ENCODE measurements at regions of chr2 and their contacts with region 1.

Region 1: GRCh38 chr2:237674731-237675276 is 47.4 kb downstream of the LRRFIP1 start:
- DNase-seq: peak; percentile 90 to 98 (median 94)
- H3K4me3 ChIP-seq: peak overlapping the region; percentile 1 to 49
- H3K4me3 Mint-ChIP-seq: peak overlapping the region; percentile 85 to 94 (median 92)
- H3K27ac ChIP-seq: peak overlapping the region; percentile 92
- H3K27ac Mint-ChIP-seq: peak overlapping the region; percentile 95 to 100 (median 100)
- H3K4me1 ChIP-seq: peaks cover 47% of the 10 kb centered on the region
- H3K4me1 Mint-ChIP-seq: peaks cover 38 to 53% (median 47%) of the 10 kb centered on the region in 4 donors
- H3K27me3 ChIP-seq: no peaks in the 10 kb centered on the region
- H3K27me3 Mint-ChIP-seq: peaks cover 0 to 1% of the 10 kb centered on the region in 2 donors

Region 2: DNA sequence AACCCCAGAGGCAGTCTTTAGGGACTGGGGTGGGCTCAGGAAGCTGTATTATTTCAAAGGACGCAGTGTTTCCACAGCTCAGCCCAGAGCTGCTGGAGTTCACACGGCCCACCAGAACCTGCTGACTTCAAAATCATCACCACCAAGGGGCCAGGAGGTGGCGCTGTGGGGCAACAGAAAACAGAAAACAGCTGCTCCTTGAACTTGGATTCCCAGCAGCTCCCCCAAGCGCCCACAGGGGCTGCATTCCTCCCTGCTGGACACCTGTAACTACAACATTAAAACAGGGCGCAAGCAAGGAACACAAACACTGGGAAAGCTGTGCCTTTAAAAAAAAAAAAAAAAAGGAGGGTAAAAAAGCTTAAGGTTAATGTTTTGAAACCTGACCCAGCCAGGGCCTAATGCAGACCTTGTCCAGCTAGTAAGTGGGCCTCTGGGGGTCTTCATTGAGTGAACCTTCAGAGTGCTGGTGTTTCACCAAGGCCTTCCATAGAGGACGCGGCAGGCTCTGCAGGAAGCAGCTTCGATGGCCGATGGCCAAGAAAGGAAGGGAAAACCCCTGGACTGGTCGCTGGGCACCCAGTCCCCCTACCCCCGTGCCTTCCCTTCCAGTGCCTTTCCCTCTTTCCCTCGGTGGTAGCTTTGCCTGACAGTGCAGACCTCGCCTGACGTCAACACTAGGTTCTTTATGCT is 161.9 kb before region 1 on chr2:
- CTCF ChIA-PET with region 1: interaction called, 18 read pairs
- POLR2A ChIA-PET with region 1: no interaction called
- intact Hi-C with region 1: loop called (anchors 1 kb)
- DNase-seq: peak; percentile 64 to 74 (median 70)
- H3K4me3 ChIP-seq: no peak overlapping the region
- H3K4me3 Mint-ChIP-seq: no peak overlapping the region
- H3K27ac ChIP-seq: no peak overlapping the region
- H3K27ac Mint-ChIP-seq: no peak overlapping the region
- H3K4me1 ChIP-seq: no peaks in the 10 kb centered on the region
- H3K4me1 Mint-ChIP-seq: no peaks in the 10 kb centered on the region
- H3K27me3 ChIP-seq: no peaks in the 10 kb centered on the region
- H3K27me3 Mint-ChIP-seq: peaks cover 0 to 3% of the 10 kb centered on the region in 2 donors

Region 3: GRCh38 chr2:237650455-237650850 is 24.4 kb before region 1 on chr2:
- CTCF ChIA-PET with region 1: no interaction called
- POLR2A ChIA-PET with region 1: no interaction called
- intact Hi-C with region 1: no loop called
- DNase-seq: no peak
- H3K4me3 ChIP-seq: no peak overlapping the region
- H3K4me3 Mint-ChIP-seq: no peak overlapping the region
- H3K27ac ChIP-seq: no peak overlapping the region
- H3K27ac Mint-ChIP-seq: no peak overlapping the region
- H3K4me1 ChIP-seq: no peaks in the 10 kb centered on the region
- H3K4me1 Mint-ChIP-seq: peaks cover 4 to 16% (median 6%) of the 10 kb centered on the region in 4 donors
- H3K27me3 ChIP-seq: no peaks in the 10 kb centered on the region
- H3K27me3 Mint-ChIP-seq: peaks cover 7 to 29% of the 10 kb centered on the region in 2 donors

Region 4: DNA sequence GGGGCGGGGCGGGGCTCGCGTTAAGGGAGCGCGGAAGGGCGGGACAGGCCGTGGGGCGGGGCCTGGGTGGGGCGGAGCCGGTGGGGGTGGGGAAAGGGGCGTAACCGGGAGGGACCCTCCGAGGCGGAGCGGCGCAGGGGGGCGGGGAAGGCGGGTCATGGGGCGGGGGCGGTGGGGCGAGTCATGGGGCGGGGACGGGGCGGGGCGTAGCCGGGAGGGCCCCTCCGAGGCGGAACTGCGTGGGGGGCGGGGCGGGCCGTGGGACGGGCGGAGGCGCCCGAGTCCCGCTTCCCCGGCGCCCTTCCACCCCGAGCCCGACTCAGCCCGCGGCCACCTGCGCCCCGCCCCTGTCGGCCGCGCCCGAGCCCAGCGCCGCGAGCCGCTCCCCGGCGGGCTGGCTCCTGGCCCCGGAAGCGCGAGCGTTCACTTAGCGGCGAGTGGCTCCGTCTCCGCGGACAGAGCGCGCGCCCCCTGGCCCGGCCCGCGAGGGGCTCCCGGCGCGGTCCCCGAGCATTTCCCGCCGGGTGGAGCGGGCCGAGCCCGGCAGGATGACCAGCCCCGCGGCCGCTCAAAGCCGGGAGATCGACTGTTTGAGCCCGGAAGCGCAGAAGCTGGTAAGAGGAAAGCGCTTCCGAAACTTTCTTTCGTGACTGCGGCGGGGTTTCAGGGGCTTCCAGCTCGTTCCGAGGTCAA is 17.2 kb after region 1 on chr2:
- CTCF ChIA-PET with region 1: interaction called, 376 read pairs
- POLR2A ChIA-PET with region 1: interaction called, 607 read pairs
- intact Hi-C with region 1: loop called (anchors 1 kb)
- DNase-seq: peak; percentile 91 to 94 (median 93)
- H3K4me3 ChIP-seq: peak overlapping the region; percentile 79 to 89
- H3K4me3 Mint-ChIP-seq: peak overlapping the region; percentile 90 to 97 (median 93)
- H3K27ac ChIP-seq: peak overlapping the region; percentile 96
- H3K27ac Mint-ChIP-seq: peak overlapping the region; percentile 93 to 99 (median 97)
- H3K4me1 ChIP-seq: peaks cover 76% of the 10 kb centered on the region
- H3K4me1 Mint-ChIP-seq: peaks cover 55 to 82% (median 69%) of the 10 kb centered on the region in 4 donors
- H3K27me3 ChIP-seq: no peaks in the 10 kb centered on the region
- H3K27me3 Mint-ChIP-seq: no peaks in the 10 kb centered on the region

Region 5: DNA sequence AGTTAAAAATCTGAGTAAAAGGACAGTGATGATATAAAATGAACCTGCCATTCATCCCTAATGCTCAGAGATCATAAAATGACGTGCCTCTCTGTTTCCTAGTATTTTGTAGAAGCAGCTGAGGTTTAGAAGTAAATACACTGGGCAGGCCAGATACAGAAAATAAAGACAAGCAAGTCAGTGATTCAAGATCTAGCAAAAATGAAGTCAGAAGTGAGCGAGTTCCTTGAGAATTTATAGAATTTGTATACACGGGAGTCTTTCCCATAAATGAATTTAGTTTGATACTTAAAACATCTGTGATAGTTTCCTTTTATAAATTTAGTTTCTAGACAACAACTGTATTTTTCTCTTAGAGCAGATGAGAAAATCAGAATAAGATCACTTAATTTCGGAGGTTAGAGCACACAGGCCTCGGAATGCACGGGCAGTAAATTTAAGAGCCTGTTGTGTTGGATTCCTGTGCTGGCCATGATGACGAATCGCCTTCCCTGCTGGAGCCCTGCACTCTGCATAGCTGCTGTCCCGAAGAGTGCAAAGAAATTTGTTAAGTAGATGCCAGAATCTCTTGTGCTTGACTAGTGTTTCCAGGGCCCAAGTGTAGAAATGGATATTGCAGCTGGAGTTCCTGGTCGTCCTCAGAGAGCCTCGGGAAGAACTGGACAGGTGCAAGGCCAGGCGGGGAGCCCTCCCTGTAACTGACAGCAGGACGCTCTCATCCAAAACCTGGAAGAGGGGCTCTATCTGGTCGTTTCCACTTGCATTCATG is 40.1 kb after region 1 on chr2:
- CTCF ChIA-PET with region 1: interaction called, 16 read pairs
- POLR2A ChIA-PET with region 1: interaction called, 6 read pairs
- intact Hi-C with region 1: no loop called
- DNase-seq: no peak
- H3K4me3 ChIP-seq: no peak overlapping the region
- H3K4me3 Mint-ChIP-seq: peak overlapping the region in 4 of 8 donors; percentile 31 to 37 (median 34)
- H3K27ac ChIP-seq: no peak overlapping the region
- H3K27ac Mint-ChIP-seq: peak overlapping the region; percentile 12 to 88 (median 64)
- H3K4me1 ChIP-seq: peaks cover 37% of the 10 kb centered on the region
- H3K4me1 Mint-ChIP-seq: peaks cover 53 to 83% (median 66%) of the 10 kb centered on the region in 4 donors
- H3K27me3 ChIP-seq: no peaks in the 10 kb centered on the region
- H3K27me3 Mint-ChIP-seq: no peaks in the 10 kb centered on the region

Region 6: DNA sequence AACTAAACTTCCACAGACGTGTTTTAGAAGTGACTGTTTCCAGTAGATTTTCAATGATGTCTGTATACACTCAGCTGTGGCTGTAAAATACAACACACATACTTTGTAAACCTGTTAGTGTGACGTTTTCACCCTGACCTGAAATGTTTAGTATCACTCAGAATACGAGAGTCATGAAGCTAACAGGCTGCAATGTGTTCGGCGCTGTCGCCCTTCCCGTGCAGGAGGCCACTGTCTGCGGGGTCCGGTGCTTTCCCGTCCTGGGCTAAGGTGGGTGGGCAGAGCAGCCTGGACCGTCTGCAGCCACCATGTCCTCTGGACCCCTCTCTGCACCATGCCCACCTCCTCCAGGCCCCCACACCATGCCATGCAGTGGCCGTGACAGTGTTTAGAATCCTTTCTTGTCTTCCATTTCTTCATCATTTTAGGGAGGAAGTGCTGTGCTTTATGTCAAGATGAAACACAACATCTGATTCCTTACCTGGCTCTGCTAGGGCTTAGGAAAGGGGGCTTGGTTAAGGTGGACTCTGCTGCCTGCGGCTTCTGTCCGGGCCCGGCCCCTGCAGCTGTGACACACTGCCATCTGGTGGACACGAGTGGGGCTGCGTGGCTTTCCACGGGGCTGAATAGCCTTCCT is 69.9 kb after region 1 on chr2:
- CTCF ChIA-PET with region 1: interaction called, 434 read pairs
- POLR2A ChIA-PET with region 1: interaction called, 75 read pairs
- intact Hi-C with region 1: loop called (anchors 1 kb)
- DNase-seq: peak; percentile 67 to 78 (median 73)
- H3K4me3 ChIP-seq: no peak overlapping the region
- H3K4me3 Mint-ChIP-seq: peak overlapping the region in 1 of 8 donors; percentile 3
- H3K27ac ChIP-seq: peak overlapping the region; percentile 35
- H3K27ac Mint-ChIP-seq: peak overlapping the region; percentile 85 to 95 (median 92)
- H3K4me1 ChIP-seq: peaks cover 32% of the 10 kb centered on the region
- H3K4me1 Mint-ChIP-seq: peaks cover 32 to 61% (median 42%) of the 10 kb centered on the region in 4 donors
- H3K27me3 ChIP-seq: no peaks in the 10 kb centered on the region
- H3K27me3 Mint-ChIP-seq: no peaks in the 10 kb centered on the region

Region 7: GRCh38 chr2:237966565-237967462 is 292.0 kb after region 1 on chr2 and contains the start of gene UBE2F:
- CTCF ChIA-PET with region 1: no interaction called
- POLR2A ChIA-PET with region 1: no interaction called
- intact Hi-C with region 1: loop called (anchors 5 kb)
- DNase-seq: peak; percentile 95 to 97 (median 97)
- H3K4me3 ChIP-seq: peak within 1 kb of the TSS; percentile 58 to 77
- H3K4me3 Mint-ChIP-seq: peak within 1 kb of the TSS; percentile 84 to 92 (median 87)
- H3K27ac ChIP-seq: peak within 1 kb of the TSS; percentile 61
- H3K27ac Mint-ChIP-seq: peak within 1 kb of the TSS; percentile 81 to 96 (median 91)
- H3K4me1 ChIP-seq: peaks cover 40% of the 10 kb centered on the region
- H3K4me1 Mint-ChIP-seq: peaks cover 32 to 52% (median 42%) of the 10 kb centered on the region in 4 donors
- H3K27me3 ChIP-seq: no peaks in the 10 kb centered on the region
- H3K27me3 Mint-ChIP-seq: no peaks in the 10 kb centered on the region
- total RNA-seq, gene UBE2F: 35.7 to 39.3 TPM

Measured in CD4-positive, alpha-beta memory T cell (primary cell).